Mammary epithelial cell (primary cell): ENCODE measurements at regions of chr20 and their contacts with region 1.

Region 1: GRCh38 chr20:63657937-63658748 is at the start of gene RTEL1:
- DNase-seq: peak; percentile 91
- H3K4me3 ChIP-seq: peak within 1 kb of the TSS; percentile 75 to 92 (median 92)
- H3K27ac ChIP-seq: peak within 1 kb of the TSS; percentile 47
- H3K4me1 ChIP-seq: peaks cover 20% of the 10 kb centered on the region
- H3K27me3 ChIP-seq: no peaks in the 10 kb centered on the region
- CTCF ChIP-seq: no peak
- total RNA-seq, gene RTEL1: 8.0 to 32.5 TPM

Region 2: GRCh38 chr20:63627129-63627750 is 30.9 kb before region 1 on chr20:
- CTCF ChIA-PET with region 1: no interaction called
- dilution Hi-C with region 1: no loop called
- in situ Hi-C with region 1: no loop called
- intact Hi-C with region 1: loop called (anchors 2 kb)
- DNase-seq: peak; percentile 94
- H3K4me3 ChIP-seq: peak overlapping the region; percentile 93 to 99 (median 97)
- H3K27ac ChIP-seq: peak overlapping the region; percentile 62
- H3K4me1 ChIP-seq: peaks cover 11% of the 10 kb centered on the region
- H3K27me3 ChIP-seq: no peaks in the 10 kb centered on the region
- CTCF ChIP-seq: no peak

Region 3: GRCh38 chr20:63942250-63942959 is 284.3 kb after region 1 on chr20:
- CTCF ChIA-PET with region 1: no interaction called
- dilution Hi-C with region 1: no loop called
- in situ Hi-C with region 1: no loop called
- intact Hi-C with region 1: no loop called
- DNase-seq: peak; percentile 79
- H3K4me3 ChIP-seq: peak overlapping the region in 2 of 3 experiments; percentile 5 to 29
- H3K27ac ChIP-seq: peak overlapping the region; percentile 69
- H3K4me1 ChIP-seq: peaks cover 32% of the 10 kb centered on the region
- H3K27me3 ChIP-seq: no peaks in the 10 kb centered on the region
- CTCF ChIP-seq: no peak